Endothelial cell of umbilical vein (primary cell): ENCODE measurements at regions of chr16 and their contacts with region 1.

Region 1: GRCh38 chr16:20774703-20775362 is 11.0 kb downstream of the ACSM3 start:
- DNase-seq: peak; percentile 70
- H3K4me3 ChIP-seq: no peak overlapping the region
- H3K27ac ChIP-seq: no peak overlapping the region
- H3K4me1 ChIP-seq: no peaks in the 10 kb centered on the region
- H3K27me3 ChIP-seq: peaks cover 0 to 1% of the 10 kb centered on the region in 2 experiments
- CTCF ChIP-seq: peak; percentile 85 to 94
- POLR2A ChIP-seq: no peak

Region 2: GRCh38 chr16:20763461-20764232 is 11.2 kb before region 1 on chr16 and contains the start of gene ACSM3:
- CTCF ChIA-PET with region 1: interaction called, 15 read pairs
- POLR2A ChIA-PET with region 1: no interaction called
- dilution Hi-C with region 1: no loop called
- intact Hi-C with region 1: no loop called
- DNase-seq: peak; percentile 46
- H3K4me3 ChIP-seq: peak within 1 kb of the TSS in 1 of 3 experiments; percentile 61
- H3K27ac ChIP-seq: no peak within 1 kb of the TSS
- H3K4me1 ChIP-seq: no peaks in the 10 kb centered on the region
- H3K27me3 ChIP-seq: peaks cover 7 to 9% of the 10 kb centered on the region in 2 experiments
- CTCF ChIP-seq: no peak
- POLR2A ChIP-seq: no peak
- total RNA-seq, gene ACSM3: 10.2 and 37.3 TPM in 2 replicates

Region 3: GRCh38 chr16:20791923-20792612 is 17.2 kb after region 1 on chr16:
- CTCF ChIA-PET with region 1: interaction called, 10 read pairs
- POLR2A ChIA-PET with region 1: no interaction called
- dilution Hi-C with region 1: no loop called
- intact Hi-C with region 1: no loop called
- DNase-seq: no peak
- H3K4me3 ChIP-seq: no peak overlapping the region
- H3K27ac ChIP-seq: no peak overlapping the region
- H3K4me1 ChIP-seq: no peaks in the 10 kb centered on the region
- H3K27me3 ChIP-seq: no peaks in the 10 kb centered on the region
- CTCF ChIP-seq: no peak
- POLR2A ChIP-seq: no peak

Region 4: GRCh38 chr16:20806168-20807050 is 31.6 kb after region 1 on chr16 and contains the starts of genes ERI2 and REXO5:
- CTCF ChIA-PET with region 1: interaction called, 12 read pairs
- POLR2A ChIA-PET with region 1: no interaction called
- dilution Hi-C with region 1: no loop called
- intact Hi-C with region 1: no loop called
- DNase-seq: peak; percentile 94
- H3K4me3 ChIP-seq: peak within 1 kb of the TSS; percentile 44 to 68 (median 50)
- H3K27ac ChIP-seq: peak within 1 kb of the TSS; percentile 49
- H3K4me1 ChIP-seq: peaks cover 8% of the 10 kb centered on the region
- H3K27me3 ChIP-seq: no peaks in the 10 kb centered on the region
- CTCF ChIP-seq: peak; percentile 36 to 66
- POLR2A ChIP-seq: peak; percentile 76
- total RNA-seq, gene ERI2: 8.9 and 9.3 TPM in 2 replicates
- total RNA-seq, gene REXO5: 7.4 and 11.5 TPM in 2 replicates

Region 5: DNA sequence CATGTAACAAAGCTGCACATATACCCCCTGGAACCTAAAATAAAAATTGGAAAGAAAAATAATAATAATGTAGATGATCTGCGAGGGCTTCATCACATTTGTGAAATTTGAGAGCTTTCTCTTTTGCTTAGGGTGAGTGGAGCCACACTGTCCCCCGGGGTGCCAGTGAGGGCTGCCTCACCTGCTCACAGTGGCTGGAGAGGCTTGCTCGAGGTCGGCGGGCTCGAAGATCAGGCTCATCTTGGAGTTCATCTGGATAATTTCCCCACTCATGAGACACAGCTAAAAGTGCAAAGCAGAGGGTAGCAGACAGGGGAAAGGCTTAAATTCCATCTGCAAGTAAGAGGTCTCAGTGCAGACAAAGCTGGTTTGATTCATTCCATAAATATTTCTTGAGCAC is 252.0 kb after region 1 on chr16:
- CTCF ChIA-PET with region 1: no interaction called
- POLR2A ChIA-PET with region 1: interaction called, 10 read pairs
- dilution Hi-C with region 1: no loop called
- intact Hi-C with region 1: no loop called
- DNase-seq: no peak
- H3K4me3 ChIP-seq: no peak overlapping the region
- H3K27ac ChIP-seq: no peak overlapping the region
- H3K4me1 ChIP-seq: no peaks in the 10 kb centered on the region
- H3K27me3 ChIP-seq: no peaks in the 10 kb centered on the region
- CTCF ChIP-seq: no peak
- POLR2A ChIP-seq: no peak